Motor neuron (in vitro differentiated cells): ENCODE measurements at regions of chr18 and their contacts with region 1.

Region 1: DNA sequence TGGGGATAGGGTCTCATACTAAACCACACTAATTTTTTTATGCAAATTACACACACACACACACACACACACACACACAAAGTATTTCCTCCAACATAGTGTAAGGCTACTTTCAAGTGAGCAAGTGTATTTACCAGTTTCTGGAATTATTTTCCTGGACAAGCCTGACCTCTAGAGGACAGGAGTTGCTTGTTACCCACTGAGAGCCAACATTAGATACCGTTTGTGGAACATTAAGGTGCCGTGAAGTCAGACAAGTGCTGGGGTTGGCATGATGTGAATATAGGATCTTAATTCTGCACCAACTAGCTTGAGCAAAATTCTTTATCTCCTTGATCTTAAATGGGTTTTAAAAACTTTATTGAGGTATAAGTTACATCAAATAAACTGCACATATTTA is 39.3 kb upstream of the SERPINB2 start:
- ATAC-seq: peak in 5 of 8 experiments; percentile 39 to 82 (median 68)
- H3K4me3 ChIP-seq: no peak overlapping the region
- H3K27ac ChIP-seq: no peak overlapping the region
- H3K4me1 ChIP-seq: no peaks in the 10 kb centered on the region

Region 2: DNA sequence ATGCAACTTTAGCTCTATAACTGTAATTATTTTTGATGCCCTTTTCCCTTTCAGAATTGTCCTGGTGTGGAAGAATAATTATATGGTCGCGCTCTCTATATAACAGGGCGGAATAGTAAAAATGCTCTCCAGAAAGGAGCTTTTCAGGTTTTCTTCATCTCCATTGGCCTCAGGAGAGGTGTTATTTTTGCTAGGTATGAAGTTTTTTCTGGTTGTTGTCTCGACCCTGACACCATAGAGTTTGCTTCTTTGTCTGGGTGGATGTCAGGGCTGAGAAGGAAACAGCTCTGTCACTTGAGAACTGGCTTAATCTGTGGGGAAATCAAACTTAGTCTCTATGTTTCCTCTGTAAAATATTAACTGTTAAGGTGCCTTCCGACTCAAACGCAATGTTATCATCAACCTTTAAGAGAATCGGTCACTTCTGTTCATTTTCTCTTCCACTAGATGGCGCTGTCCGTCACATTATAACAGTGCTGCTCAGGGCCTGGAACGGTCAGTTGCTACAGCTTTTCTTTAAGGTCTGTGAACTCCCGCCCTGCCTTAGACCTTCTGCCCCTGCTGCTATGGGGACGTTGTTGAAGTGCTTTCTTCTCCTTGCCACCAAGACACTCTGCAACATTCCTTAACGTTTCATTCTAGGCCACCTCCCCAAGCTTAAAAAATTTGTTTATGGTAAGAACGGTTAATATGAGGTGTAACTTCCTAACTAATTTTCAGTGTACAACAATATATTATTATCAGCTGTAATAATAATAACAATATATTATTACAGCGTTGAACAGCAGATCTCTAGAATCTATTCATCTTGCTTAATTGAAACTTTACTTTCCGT is 329.8 kb before region 1 on chr18:
- in situ Hi-C with region 1: loop called in 6 of 9 experiments (anchors 25 kb)
- ATAC-seq: peak; percentile 83 to 98 (median 90)
- H3K4me3 ChIP-seq: no peak overlapping the region
- H3K27ac ChIP-seq: no peak overlapping the region
- H3K4me1 ChIP-seq: no peaks in the 10 kb centered on the region

Region 3: DNA sequence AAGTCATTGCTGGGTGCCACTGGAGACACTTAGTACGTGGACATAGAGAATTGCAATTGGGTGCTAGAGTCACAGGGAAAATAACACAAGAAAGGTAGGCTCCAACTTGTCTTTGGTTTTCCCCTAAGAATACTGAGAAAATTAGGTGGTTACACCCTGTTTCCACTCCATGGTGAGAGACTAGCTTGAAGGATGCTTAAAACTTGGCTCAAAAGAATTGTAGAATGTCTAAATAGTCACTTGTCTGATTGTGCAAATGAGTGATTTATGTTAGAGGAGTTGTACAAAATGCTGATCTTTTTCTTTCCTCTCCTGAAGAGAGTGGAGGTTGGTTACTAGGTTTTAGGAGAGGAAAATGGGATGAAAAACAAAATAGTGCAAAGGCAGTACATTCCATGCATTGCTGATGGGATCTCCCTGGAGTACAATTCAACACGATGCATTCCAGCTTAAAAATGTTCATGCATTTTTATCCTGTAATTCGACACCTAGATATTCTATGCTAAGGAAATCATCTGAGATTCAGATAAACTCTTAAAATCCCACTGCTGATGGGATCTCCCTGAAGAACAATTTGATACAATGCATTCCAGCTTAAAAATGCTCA is 308.2 kb before region 1 on chr18:
- in situ Hi-C with region 1: loop called in 1 of 9 experiments (anchors 25 kb)
- ATAC-seq: peak in 7 of 8 experiments; percentile 31 to 98 (median 90)
- H3K4me3 ChIP-seq: no peak overlapping the region
- H3K27ac ChIP-seq: no peak overlapping the region
- H3K4me1 ChIP-seq: peaks cover 3 to 7% of the 10 kb centered on the region in 2 donors

Region 4: DNA sequence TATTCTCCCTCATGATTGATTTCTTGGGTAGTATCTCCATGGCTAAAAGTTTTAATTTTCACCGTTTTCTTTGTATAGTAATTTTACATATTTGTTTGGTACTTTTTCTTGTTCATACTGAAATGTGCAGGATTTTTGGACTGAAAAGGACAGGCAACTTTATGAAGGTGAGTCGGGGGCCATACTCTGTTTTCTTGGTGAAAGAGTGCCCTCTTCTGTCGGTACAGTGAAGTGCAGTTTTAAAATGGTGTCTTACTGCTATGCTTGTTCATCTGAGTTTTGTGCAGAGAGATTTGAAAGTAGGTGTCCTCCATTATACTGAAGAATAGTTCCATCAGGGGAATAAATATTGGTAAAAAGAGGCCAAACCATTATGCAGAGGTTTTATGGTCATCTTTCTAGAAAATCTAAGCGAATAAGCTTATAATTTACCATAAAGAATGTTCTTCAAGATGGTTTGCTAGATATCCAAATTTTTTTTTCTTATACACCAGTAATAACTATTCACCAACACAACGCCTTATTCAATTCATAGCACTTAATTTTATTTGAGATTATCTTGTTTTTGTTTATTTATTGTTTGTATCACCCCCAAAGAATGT is 269.7 kb before region 1 on chr18:
- in situ Hi-C with region 1: loop called in 1 of 9 experiments (anchors 25 kb)
- ATAC-seq: peak in 4 of 8 experiments; percentile 44 to 77 (median 51)
- H3K4me3 ChIP-seq: no peak overlapping the region
- H3K27ac ChIP-seq: no peak overlapping the region
- H3K4me1 ChIP-seq: no peaks in the 10 kb centered on the region

Region 5: GRCh38 chr18:63979409-63979920 is 131.3 kb after region 1 on chr18:
- in situ Hi-C with region 1: no loop called
- ATAC-seq: peak in 7 of 8 experiments; percentile 33 to 92 (median 70)
- H3K4me3 ChIP-seq: no peak overlapping the region
- H3K27ac ChIP-seq: no peak overlapping the region
- H3K4me1 ChIP-seq: no peaks in the 10 kb centered on the region